Prostate gland (tissue), 2 donors: ENCODE measurements at regions of chr2 and their contacts with region 1.

Region 1: DNA sequence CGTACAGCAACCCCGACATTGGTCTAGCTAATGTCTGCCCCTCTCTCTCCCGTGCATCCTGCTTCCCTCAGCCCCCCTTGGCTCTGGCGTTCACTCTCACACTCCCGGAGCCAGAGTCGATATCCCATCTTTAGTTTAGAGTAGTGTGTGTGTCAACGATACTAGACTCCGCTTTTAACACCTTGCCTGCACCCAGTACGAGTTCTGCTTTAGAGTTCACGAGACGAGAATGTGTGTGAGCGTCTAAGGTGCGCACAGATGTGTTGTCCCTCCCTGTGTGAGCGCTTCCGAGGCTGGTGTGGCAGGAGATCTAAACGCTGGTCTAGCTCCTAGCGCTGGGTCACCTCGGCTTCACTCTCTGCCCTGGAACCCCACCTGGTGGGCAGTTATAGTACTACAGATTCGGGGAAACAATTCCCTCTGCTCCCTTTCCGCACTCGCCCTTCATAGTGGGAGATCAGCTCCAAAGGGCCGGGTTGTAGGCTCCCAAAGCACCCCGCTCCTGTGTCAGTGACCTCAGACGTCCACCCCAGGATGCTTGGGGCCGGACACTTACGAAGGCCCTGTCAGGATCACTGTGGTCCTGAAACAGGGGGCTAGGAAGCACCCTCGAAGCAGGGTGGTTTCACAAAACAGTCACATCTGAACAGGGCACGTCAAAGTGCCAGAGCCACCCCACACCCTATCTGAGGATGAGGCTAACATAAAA is 2.6 kb upstream of the CYP26B1 start:
- DNase-seq: peak; percentile 76
- H3K4me3 ChIP-seq: peak overlapping the region in 1 of 2 donors; percentile 37
- H3K27ac ChIP-seq: no peak overlapping the region
- H3K4me1 ChIP-seq: peaks cover 15% of the 10 kb centered on the region
- H3K27me3 ChIP-seq: peaks cover 19% of the 10 kb centered on the region
- CTCF ChIP-seq: peak; percentile 90 to 93 (median 90)
- POLR2A ChIP-seq: no peak

Region 2: DNA sequence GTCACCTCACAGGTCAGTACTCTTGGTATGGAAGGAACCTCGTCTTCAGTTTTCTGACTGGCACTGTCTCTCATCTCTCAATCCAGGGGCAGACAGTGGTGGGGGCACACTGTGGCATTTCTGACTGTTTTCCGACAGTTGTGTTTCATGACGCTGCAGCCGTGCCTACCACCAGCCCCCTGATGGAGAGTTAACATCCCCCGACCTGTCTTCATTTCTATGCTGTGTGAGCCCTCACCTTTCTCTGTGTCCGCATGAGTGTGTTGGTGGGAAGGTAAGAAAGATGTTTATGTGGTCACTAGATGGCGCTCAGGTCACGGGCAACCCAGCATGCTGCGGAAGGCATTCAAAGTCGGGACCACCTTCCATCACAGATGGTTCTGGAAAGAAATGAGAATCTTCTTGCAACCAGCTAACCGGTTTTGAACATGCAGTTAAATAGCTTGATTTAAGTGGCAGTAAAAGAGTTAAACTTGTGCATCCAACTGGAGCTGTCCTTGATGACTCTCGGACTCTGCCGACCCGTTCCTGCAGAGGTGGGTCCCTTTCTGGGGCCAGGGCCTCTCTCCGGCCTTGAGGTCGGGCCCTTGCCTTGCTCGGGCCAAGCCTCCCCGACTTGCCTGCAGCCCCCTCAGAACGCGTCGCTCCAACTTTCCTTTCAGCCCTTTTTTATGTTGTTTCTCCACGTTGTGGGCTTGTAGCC is 604.6 kb before region 1 on chr2:
- intact Hi-C with region 1: loop called (anchors 2 kb)
- DNase-seq: peak; percentile 56
- H3K4me3 ChIP-seq: no peak overlapping the region
- H3K27ac ChIP-seq: no peak overlapping the region
- H3K4me1 ChIP-seq: no peaks in the 10 kb centered on the region
- H3K27me3 ChIP-seq: no peaks in the 10 kb centered on the region
- CTCF ChIP-seq: peak; percentile 22 to 74 (median 64)
- POLR2A ChIP-seq: no peak

Region 3: GRCh38 chr2:71609958-71610357 is 540.4 kb before region 1 on chr2:
- intact Hi-C with region 1: loop called (anchors 5 kb)
- DNase-seq: no peak
- H3K4me3 ChIP-seq: no peak overlapping the region
- H3K27ac ChIP-seq: no peak overlapping the region
- H3K4me1 ChIP-seq: no peaks in the 10 kb centered on the region
- H3K27me3 ChIP-seq: no peaks in the 10 kb centered on the region
- CTCF ChIP-seq: peak in 3 of 4 experiments; percentile 15 to 34 (median 28)
- POLR2A ChIP-seq: no peak

Region 4: DNA sequence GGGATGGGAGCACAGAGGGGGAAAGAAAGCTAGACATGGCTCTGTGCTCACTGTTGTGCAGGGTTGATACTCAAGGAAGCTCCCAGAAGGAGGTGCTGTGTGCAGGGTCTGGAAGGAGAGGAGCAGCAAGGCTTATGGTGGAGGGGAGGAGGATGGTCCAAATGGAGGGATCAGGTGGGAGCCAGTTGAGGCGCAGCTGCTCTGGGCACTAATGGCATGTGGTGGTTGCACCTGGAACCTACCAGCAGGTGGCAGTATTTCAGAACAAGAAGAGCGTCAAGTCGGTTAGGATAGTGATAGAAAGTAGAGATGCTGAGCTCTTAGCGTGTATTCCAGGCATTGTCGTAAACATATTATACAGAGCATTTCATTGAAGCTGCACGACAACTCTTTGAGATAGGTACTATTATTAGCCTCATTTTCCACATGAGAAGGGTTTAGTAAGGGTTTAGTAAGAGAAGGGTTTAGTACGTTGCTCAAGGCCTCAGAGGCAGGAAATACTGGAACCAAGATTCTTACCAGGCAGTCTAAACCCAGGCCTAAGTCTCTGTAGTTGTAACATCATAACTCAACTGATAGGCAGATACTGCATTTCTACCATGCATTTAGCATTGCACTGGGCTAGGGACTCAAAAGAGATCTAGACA is 226.3 kb before region 1 on chr2:
- intact Hi-C with region 1: loop called (anchors 5 kb)
- DNase-seq: peak; percentile 69
- H3K4me3 ChIP-seq: no peak overlapping the region
- H3K27ac ChIP-seq: no peak overlapping the region
- H3K4me1 ChIP-seq: no peaks in the 10 kb centered on the region
- H3K27me3 ChIP-seq: no peaks in the 10 kb centered on the region
- CTCF ChIP-seq: peak; percentile 56 to 94 (median 82)
- POLR2A ChIP-seq: no peak

Region 5: DNA sequence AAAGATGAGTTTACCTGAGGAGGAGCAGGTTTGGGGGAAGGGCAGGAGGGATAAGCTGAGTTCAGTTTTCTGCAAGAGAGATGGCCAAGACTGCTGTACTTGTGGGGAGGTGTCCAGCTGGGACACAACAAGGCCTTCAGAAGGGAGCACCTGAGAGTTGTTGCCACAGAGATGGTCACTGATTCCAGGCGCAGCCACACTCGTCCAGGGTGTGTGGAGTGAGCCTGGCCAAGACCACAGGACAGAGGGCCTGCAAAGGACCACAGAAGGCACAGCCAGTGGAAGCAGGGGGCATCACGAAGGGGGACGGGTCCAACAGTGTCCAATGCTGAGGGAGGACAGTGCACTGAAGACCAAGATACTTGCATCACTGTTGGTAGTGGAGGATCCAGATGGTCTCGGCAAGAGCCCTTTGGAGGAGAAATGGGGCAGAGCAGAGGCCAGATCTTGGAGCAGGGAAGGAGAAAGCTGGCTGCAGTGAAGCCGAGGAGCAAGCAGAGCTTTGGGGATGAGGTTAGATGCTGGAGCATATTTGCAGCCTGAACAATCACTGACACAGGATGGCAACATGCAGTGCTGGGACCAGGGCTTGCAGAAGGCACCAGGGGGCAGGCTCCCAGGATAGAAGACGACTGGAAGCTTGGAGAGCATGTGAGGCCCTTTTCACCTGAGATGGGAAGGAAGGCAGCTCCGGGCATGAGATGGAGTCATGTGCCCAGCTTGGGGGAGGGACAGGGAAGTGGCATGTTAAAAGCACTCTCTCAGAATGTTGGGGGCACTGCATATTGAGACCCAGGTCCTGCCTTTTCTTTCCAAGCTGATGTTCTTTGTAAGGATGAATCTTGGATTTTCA is 216.6 kb before region 1 on chr2:
- intact Hi-C with region 1: loop called (anchors 5 kb)
- DNase-seq: no peak
- H3K4me3 ChIP-seq: no peak overlapping the region
- H3K27ac ChIP-seq: no peak overlapping the region
- H3K4me1 ChIP-seq: no peaks in the 10 kb centered on the region
- H3K27me3 ChIP-seq: no peaks in the 10 kb centered on the region
- CTCF ChIP-seq: peak in 1 of 4 experiments; percentile 16
- POLR2A ChIP-seq: no peak

Region 6: DNA sequence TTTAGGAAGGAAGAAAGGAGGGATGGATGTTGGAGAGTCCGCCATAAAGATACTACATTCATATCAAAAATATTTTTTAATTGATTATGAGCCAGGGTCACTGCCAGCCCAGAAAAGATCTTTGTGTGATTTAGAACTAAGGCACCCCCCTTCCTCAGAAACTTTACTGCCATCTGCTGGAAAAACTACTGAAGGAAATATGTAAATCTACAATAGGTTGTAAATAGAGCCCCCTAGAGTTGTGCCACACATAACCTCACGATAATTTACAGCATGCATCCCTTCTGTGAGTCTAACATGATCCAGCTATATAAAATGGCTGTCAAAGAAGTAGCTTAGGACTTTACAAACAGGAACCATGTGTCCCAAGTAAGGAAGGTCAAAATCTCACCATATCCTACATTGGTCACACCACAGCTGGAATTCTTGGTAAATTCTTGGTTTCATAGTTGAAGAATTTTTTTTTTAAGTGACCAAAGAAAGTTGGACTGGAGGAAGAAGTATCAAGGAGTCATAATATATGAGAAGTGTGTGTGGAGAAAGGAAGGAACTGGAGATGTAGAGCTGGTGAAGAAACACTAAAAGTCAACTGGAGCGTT is 155.1 kb before region 1 on chr2:
- intact Hi-C with region 1: no loop called
- DNase-seq: no peak
- H3K4me3 ChIP-seq: no peak overlapping the region
- H3K27ac ChIP-seq: no peak overlapping the region
- H3K4me1 ChIP-seq: no peaks in the 10 kb centered on the region
- H3K27me3 ChIP-seq: no peaks in the 10 kb centered on the region
- CTCF ChIP-seq: peak in 2 of 4 experiments; percentile 15 to 23
- POLR2A ChIP-seq: no peak

Region 7: GRCh38 chr2:72182547-72182946 is 32.2 kb after region 1 on chr2:
- intact Hi-C with region 1: no loop called
- DNase-seq: no peak
- H3K4me3 ChIP-seq: no peak overlapping the region
- H3K27ac ChIP-seq: no peak overlapping the region
- H3K4me1 ChIP-seq: no peaks in the 10 kb centered on the region
- H3K27me3 ChIP-seq: no peaks in the 10 kb centered on the region
- CTCF ChIP-seq: no peak
- POLR2A ChIP-seq: no peak

Region 8: DNA sequence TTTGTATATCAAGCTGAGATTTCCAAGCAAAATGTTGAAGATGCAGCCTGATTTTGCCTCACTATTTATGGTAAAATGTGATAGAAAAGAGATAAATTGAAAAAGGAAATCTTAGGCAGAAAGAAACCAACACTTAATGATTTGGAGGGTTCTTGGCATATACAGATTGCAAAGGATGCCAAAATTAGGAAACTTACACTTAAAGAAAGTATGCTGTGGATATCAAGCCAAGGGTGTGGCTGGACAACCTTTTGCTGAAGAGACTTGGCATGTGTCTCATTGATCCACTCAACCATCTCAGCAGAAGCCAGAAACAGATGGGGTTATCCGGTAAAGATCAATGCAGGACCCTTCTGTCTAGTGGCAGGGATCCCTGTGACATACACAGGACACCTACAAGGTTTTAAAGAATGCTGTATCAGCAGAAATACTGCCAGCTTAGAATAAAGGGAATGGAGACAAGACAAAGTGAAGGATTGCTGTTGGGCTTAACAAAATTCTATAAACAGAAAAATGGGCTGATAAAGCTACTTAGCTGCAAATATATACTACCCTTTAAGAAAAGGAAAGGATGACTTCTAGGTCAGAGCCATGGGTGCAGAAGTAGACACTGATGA is 104.6 kb after region 1 on chr2:
- intact Hi-C with region 1: no loop called
- DNase-seq: no peak
- H3K4me3 ChIP-seq: no peak overlapping the region
- H3K27ac ChIP-seq: no peak overlapping the region
- H3K4me1 ChIP-seq: no peaks in the 10 kb centered on the region
- H3K27me3 ChIP-seq: no peaks in the 10 kb centered on the region
- CTCF ChIP-seq: no peak
- POLR2A ChIP-seq: no peak

Region 9: GRCh38 chr2:72579591-72580180 is 429.4 kb after region 1 on chr2:
- intact Hi-C with region 1: loop called (anchors 5 kb)
- DNase-seq: no peak
- H3K4me3 ChIP-seq: no peak overlapping the region
- H3K27ac ChIP-seq: no peak overlapping the region
- H3K4me1 ChIP-seq: no peaks in the 10 kb centered on the region
- H3K27me3 ChIP-seq: no peaks in the 10 kb centered on the region
- CTCF ChIP-seq: peak; percentile 28 to 73 (median 64)
- POLR2A ChIP-seq: no peak